ENCODE measurements at regions of chr3 and their contacts with region 1.

Region 1: GRCh38 chr3:110905121-110905520 is 166.5 kb upstream of the NECTIN3 start:
- DNase-seq: no peak
- ATAC-seq: no peak
- H3K4me3 ChIP-seq: no peak overlapping the region
- H3K27ac ChIP-seq: no peak overlapping the region
- H3K4me1 ChIP-seq: no peaks in the 10 kb centered on the region
- H3K27me3 ChIP-seq: no peaks in the 10 kb centered on the region

Region 2: GRCh38 chr3:109316162-109316730 is 1588.9 kb before region 1 on chr3 and contains the start of gene DPPA2:
- intact Hi-C with region 1: loop called in 1 of 4 experiments (anchors 5 kb)
- DNase-seq: no peak
- ATAC-seq: no peak
- H3K4me3 ChIP-seq: no peak within 1 kb of the TSS
- H3K27ac ChIP-seq: no peak within 1 kb of the TSS
- H3K4me1 ChIP-seq: no peaks in the 10 kb centered on the region
- H3K27me3 ChIP-seq: no peaks in the 10 kb centered on the region
- total RNA-seq, gene DPPA2: not detected

Region 3: GRCh38 chr3:110754212-110754916 is 150.8 kb before region 1 on chr3:
- intact Hi-C with region 1: no loop called
- DNase-seq: no peak
- ATAC-seq: no peak
- H3K4me3 ChIP-seq: no peak overlapping the region
- H3K27ac ChIP-seq: no peak overlapping the region
- H3K4me1 ChIP-seq: no peaks in the 10 kb centered on the region
- H3K27me3 ChIP-seq: no peaks in the 10 kb centered on the region